H1 (cell line): ENCODE measurements at regions of chr16 and their contacts with region 1.

Region 1: GRCh38 chr16:81545470-81546250 is 101.1 kb downstream of the CMIP start:
- DNase-seq: no peak
- H3K4me3 ChIP-seq: no peak overlapping the region
- H3K27ac ChIP-seq: no peak overlapping the region
- H3K4me1 ChIP-seq: peaks cover 0 to 8% (median 3%) of the 10 kb centered on the region in 4 experiments; a peak in 4 of 7 replicates
- H3K27me3 ChIP-seq: no peaks in the 10 kb centered on the region
- CTCF ChIP-seq: no peak
- EP300 ChIP-seq: no peak
- POLR2A ChIP-seq: no peak
- RAD21 ChIP-seq: no peak

Region 2: DNA sequence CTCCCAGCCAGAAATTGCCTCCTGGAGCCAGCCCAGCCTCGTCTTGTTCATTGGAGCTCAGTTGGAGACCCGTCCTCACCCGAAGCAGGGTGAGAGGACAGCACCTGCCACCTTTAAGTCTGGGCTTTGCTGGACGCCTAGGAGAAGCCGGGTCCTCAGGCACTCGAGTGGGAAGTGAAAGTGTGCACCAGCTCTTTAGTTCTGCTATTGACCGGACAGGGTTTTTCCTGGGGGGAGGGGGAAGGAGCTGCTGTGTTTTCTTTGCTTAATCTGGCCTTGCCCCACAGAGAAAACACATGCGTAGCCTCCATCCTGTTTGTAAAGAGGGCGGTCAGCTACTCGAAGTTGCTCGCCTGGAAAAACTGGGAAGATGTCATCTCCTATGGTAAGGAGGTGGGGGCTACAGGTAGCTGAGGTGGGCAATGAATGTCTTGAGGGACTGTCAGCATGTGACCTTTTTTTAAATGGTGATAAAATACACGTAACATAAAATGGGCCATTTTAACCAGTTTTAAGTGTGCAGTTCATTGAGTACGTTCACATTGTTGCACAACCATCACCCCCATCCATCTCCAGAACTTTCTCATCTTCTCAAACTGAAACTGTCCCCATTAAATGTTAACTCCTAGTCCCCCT is 66.7 kb before region 1 on chr16:
- CTCF ChIA-PET with region 1: no interaction called
- POLR2A ChIA-PET with region 1: no interaction called
- DNase-seq: no peak
- H3K4me3 ChIP-seq: no peak overlapping the region
- H3K27ac ChIP-seq: no peak overlapping the region
- H3K4me1 ChIP-seq: peaks cover 4 to 24% (median 7%) of the 10 kb centered on the region in 4 experiments
- H3K27me3 ChIP-seq: no peaks in the 10 kb centered on the region
- CTCF ChIP-seq: no peak
- EP300 ChIP-seq: no peak
- POLR2A ChIP-seq: no peak
- RAD21 ChIP-seq: no peak

Region 3: GRCh38 chr16:81556715-81557284 is 11.1 kb after region 1 on chr16:
- CTCF ChIA-PET with region 1: interaction called, 10 read pairs
- POLR2A ChIA-PET with region 1: interaction called, 4 read pairs
- DNase-seq: no peak
- H3K4me3 ChIP-seq: no peak overlapping the region
- H3K27ac ChIP-seq: no peak overlapping the region
- H3K4me1 ChIP-seq: peaks cover 0 to 7% (median 3%) of the 10 kb centered on the region in 4 experiments; a peak in 4 of 7 replicates
- H3K27me3 ChIP-seq: no peaks in the 10 kb centered on the region
- CTCF ChIP-seq: no peak
- EP300 ChIP-seq: no peak
- POLR2A ChIP-seq: no peak
- RAD21 ChIP-seq: no peak